ENCODE measurements at regions of chr9 and their contacts with region 1.

Region 1: GRCh38 chr9:99389087-99390005 is 167.3 kb downstream of the SEC61B start:
- DNase-seq: no peak
- ATAC-seq: peak; percentile 48 to 91

Region 2: DNA sequence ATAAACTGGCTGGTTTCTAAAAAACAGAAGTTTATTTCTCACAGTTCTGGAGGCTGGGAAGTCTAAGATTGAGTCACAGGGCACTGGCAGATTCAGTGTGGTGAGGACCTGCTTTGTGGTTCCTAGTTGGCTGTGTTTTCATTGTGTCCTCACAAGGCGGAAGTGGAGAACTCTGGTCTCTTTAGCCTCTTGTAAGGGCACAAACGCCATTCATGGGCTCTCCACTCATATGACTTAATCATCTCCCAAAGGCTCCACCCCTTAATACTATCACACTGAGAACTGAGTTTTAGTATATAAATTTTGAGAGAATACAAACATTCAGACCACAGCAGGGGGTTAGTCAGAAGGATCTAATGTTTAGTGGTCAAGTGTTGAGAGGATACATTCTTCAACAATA is 41.0 kb after region 1 on chr9:
- intact Hi-C with region 1: no loop called
- DNase-seq: no peak
- ATAC-seq: no peak

Region 3: DNA sequence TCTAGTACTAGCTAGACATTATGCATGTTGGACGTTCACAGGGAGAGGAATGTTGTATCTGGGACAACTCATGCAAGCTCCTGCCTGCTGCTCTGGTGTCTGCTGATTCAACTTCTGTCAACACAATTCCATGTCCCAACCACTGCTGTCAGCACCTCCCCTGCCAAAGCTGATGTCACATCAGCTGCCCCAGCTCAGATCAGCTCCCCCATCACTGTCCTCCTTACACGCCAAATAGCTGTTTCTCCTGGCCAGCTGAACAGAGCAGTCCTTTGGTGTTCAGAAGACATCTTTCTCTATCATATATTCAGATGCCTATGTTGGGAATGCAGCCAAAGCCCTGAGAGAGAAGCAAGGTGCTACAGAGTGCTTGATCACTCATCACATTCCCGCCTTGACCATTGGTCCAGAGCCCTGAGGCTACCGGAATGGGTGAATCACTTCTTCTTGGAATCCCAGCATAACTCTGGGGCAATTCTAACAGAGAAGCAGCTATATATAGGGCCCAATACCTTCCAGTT is 56.1 kb after region 1 on chr9:
- intact Hi-C with region 1: loop called in 1 of 2 experiments (anchors 5 kb)
- DNase-seq: peak; percentile 76
- ATAC-seq: peak; percentile 96 to 97

Measured in left cardiac atrium (tissue), 4 donors.